ENCODE measurements at regions of chr1 and their contacts with region 1.

Region 1: DNA sequence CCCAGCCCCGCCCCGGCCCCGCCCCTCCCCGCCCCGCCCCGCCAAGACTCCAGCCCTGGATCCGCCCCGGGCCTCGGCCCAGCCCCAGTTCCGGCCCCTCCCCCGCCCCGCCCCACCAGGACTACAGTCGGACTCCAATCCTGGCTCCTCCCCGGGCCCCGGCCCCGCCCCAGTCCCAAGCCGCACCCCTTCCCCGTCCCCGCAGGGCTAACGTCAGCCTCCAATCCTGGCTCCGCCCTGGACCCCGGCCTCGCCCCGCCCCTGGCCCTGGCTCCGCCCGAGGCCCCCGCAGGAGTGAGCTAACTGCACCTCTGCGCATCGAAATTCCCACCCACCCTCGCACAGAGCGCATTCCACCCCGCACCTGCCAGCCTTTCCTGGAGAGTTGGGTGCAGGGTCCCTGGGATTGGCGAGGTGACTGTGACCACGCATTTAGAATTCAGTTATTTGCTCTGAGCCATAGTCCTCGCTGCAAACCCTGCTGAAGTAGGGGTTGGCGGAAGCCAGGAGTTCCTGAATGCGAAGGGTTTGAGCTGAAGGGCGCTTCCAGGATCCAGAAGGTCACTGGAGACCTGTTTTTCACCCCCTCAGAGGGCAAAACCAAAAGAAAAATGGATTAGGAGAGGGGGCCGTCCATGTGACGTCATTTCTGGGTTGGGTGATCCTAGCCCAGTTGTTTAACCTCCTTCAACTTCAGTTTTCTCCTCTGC is 588 bp upstream of the IGSF8 start:
- DNase-seq: peak; percentile 99
- ATAC-seq: peak; percentile 78
- H3K4me3 Mint-ChIP-seq: peak overlapping the region; percentile 69
- H3K27ac Mint-ChIP-seq: peak overlapping the region; percentile 88
- H3K4me1 Mint-ChIP-seq: peaks cover 71% of the 10 kb centered on the region
- H3K27me3 Mint-ChIP-seq: peaks cover 5% of the 10 kb centered on the region; the same call in 1 of the 2 replicates
- CTCF ChIP-seq: no peak

Region 2: GRCh38 chr1:159664247-159664646 is 434.8 kb before region 1 on chr1:
- CTCF ChIA-PET with region 1: no interaction called
- POLR2A ChIA-PET with region 1: no interaction called
- DNase-seq: no peak
- ATAC-seq: no peak
- H3K4me3 Mint-ChIP-seq: no peak overlapping the region
- H3K27ac Mint-ChIP-seq: no peak overlapping the region
- H3K4me1 Mint-ChIP-seq: no peaks in the 10 kb centered on the region
- H3K27me3 Mint-ChIP-seq: no peaks in the 10 kb centered on the region
- CTCF ChIP-seq: no peak

Region 3: GRCh38 chr1:160046494-160047110 is 52.4 kb before region 1 on chr1:
- CTCF ChIA-PET with region 1: interaction called, 30 read pairs
- POLR2A ChIA-PET with region 1: no interaction called
- DNase-seq: peak; percentile 61
- ATAC-seq: peak; percentile 88
- H3K4me3 Mint-ChIP-seq: peak overlapping the region; percentile 26; the same call in 1 of the 2 replicates
- H3K27ac Mint-ChIP-seq: no peak overlapping the region
- H3K4me1 Mint-ChIP-seq: peaks cover 30% of the 10 kb centered on the region
- H3K27me3 Mint-ChIP-seq: peaks cover 7% of the 10 kb centered on the region
- CTCF ChIP-seq: peak; percentile 57; the same call in 1 of the 2 replicates

Region 4: GRCh38 chr1:160085686-160086455 is 13.1 kb before region 1 on chr1:
- CTCF ChIA-PET with region 1: interaction called, 170 read pairs
- POLR2A ChIA-PET with region 1: interaction called, 5 read pairs
- DNase-seq: peak; percentile 94
- ATAC-seq: peak; percentile 74
- H3K4me3 Mint-ChIP-seq: no peak overlapping the region
- H3K27ac Mint-ChIP-seq: no peak overlapping the region
- H3K4me1 Mint-ChIP-seq: peaks cover 19% of the 10 kb centered on the region
- H3K27me3 Mint-ChIP-seq: peaks cover 51% of the 10 kb centered on the region
- CTCF ChIP-seq: peak; percentile 92

Region 5: GRCh38 chr1:160124705-160125478 is 25.9 kb after region 1 on chr1:
- CTCF ChIA-PET with region 1: interaction called, 83 read pairs
- POLR2A ChIA-PET with region 1: no interaction called
- DNase-seq: no peak
- ATAC-seq: peak; percentile 52
- H3K4me3 Mint-ChIP-seq: no peak overlapping the region
- H3K27ac Mint-ChIP-seq: peak overlapping the region; percentile 4; the same call in 1 of the 2 replicates
- H3K4me1 Mint-ChIP-seq: peaks cover 12% of the 10 kb centered on the region
- H3K27me3 Mint-ChIP-seq: no peaks in the 10 kb centered on the region
- CTCF ChIP-seq: no peak

Region 6: DNA sequence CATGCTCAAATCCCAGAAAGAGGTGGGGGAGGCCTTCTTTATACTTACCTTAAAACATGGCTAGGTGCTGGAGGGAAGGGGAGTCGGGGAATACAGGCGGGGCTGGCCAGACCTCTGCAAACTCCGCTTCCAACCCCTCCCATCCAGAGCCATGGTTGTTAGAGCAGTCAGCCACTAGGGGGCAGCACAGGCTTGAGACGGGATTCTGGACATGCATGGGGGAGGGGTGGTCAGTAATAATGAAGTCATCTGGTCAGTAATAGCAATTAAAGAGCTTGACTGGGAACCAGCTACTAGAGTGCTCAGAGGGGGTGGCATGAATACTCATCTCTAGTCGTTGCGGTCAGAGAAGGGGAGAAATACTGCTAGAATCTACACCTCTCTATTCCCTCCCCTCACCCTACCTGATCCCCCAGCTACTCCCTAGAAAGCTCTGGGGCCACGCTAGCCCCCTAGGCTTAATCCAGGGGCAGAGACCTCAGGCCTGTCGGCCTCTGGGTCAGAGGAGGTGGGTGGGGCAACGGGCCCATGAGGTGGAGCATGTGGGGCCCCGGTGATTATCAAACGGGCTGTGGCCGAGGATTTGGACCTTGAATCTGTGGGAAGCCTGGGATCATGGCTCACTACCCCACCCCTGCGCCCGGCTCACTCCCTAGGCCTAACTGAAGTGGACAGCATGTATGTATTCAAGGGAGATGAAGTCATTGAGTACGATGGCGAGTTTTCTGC is 94.2 kb after region 1 on chr1:
- CTCF ChIA-PET with region 1: interaction called, 13 read pairs
- POLR2A ChIA-PET with region 1: no interaction called
- DNase-seq: peak; percentile 96
- ATAC-seq: peak; percentile 88
- H3K4me3 Mint-ChIP-seq: no peak overlapping the region
- H3K27ac Mint-ChIP-seq: no peak overlapping the region
- H3K4me1 Mint-ChIP-seq: peaks cover 13% of the 10 kb centered on the region
- H3K27me3 Mint-ChIP-seq: no peaks in the 10 kb centered on the region; the same call in 1 of the 2 replicates
- CTCF ChIP-seq: peak; percentile 95

Region 7: GRCh38 chr1:160376525-160377131 is 277.6 kb after region 1 on chr1:
- CTCF ChIA-PET with region 1: interaction called, 11 read pairs
- POLR2A ChIA-PET with region 1: no interaction called
- DNase-seq: no peak
- ATAC-seq: peak; percentile 71
- H3K4me3 Mint-ChIP-seq: peak overlapping the region; percentile 49
- H3K27ac Mint-ChIP-seq: no peak overlapping the region
- H3K4me1 Mint-ChIP-seq: peaks cover 35% of the 10 kb centered on the region
- H3K27me3 Mint-ChIP-seq: no peaks in the 10 kb centered on the region
- CTCF ChIP-seq: peak; percentile 61

Measured in WTC11 (cell line).